WTC11 (cell line): ENCODE measurements at regions of chr11 and their contacts with region 1.

Region 1: GRCh38 chr11:60634126-60634525 is 65.3 kb upstream of the MS4A8 start:
- DNase-seq: peak; percentile 57
- ATAC-seq: peak; percentile 99
- H3K4me3 Mint-ChIP-seq: no peak overlapping the region
- H3K27ac Mint-ChIP-seq: no peak overlapping the region
- H3K4me1 Mint-ChIP-seq: no peaks in the 10 kb centered on the region
- H3K27me3 Mint-ChIP-seq: peaks cover 7% of the 10 kb centered on the region; the same call in 1 of the 2 replicates
- CTCF ChIP-seq: peak; percentile 58; the same call in 1 of the 2 replicates

Region 2: DNA sequence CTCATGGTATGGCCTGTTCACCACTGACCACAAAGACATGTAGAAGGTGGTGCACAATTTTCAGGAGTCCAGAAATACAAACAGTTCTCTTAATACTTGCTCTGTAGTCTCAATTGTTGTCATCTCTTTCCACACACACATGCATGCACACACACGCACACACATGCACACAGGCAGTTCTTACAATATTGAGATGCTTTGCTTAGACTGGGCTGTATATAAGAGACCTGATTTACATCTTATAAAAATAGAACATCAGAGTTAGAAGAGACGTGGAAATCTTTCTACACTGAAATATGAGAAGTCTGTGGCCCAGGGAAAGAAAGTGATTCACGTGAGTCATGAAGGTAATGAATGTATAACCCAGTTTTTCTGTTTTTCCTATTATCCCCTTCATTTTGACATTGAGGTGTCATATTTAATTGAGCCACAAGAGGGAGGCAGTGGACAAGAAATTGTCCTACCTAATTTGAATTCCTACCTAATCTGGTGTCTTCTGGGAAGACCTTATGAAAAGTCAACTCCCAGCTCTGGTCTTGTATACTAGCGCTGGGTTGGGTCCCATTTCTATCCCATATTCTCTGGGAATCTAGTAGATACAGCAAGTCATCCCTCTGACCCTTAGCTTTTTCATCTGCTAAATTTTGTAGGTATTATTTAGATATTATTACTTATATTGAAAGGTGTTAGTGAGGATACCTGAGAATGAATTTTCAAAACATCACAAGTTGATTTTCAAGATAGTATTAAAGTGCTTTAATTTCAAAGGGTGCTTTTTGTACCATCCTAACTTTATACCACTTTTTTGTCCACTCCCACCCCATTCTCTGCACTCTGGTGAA is 368.5 kb before region 1 on chr11:
- CTCF ChIA-PET with region 1: interaction called, 18 read pairs
- POLR2A ChIA-PET with region 1: no interaction called
- DNase-seq: no peak
- ATAC-seq: peak; percentile 44
- H3K4me3 Mint-ChIP-seq: no peak overlapping the region
- H3K27ac Mint-ChIP-seq: no peak overlapping the region
- H3K4me1 Mint-ChIP-seq: 0 out of 2 replicates have a peak, but pooled peaks cover 5% of the 10 kb centered on the region
- H3K27me3 Mint-ChIP-seq: no peaks in the 10 kb centered on the region; the same call in 1 of the 2 replicates
- CTCF ChIP-seq: peak; percentile 54

Region 3: GRCh38 chr11:60672255-60672654 is 38.1 kb after region 1 on chr11:
- CTCF ChIA-PET with region 1: no interaction called
- POLR2A ChIA-PET with region 1: no interaction called
- DNase-seq: no peak
- ATAC-seq: no peak
- H3K4me3 Mint-ChIP-seq: no peak overlapping the region
- H3K27ac Mint-ChIP-seq: no peak overlapping the region
- H3K4me1 Mint-ChIP-seq: no peaks in the 10 kb centered on the region
- H3K27me3 Mint-ChIP-seq: peaks cover 4% of the 10 kb centered on the region
- CTCF ChIP-seq: no peak